ENCODE measurements at regions of chr1 and their contacts with region 1.

Region 1: GRCh38 chr1:111045033-111045722 is 81.5 kb upstream of the LRIF1 start:
- DNase-seq: peak; percentile 50 to 61
- H3K4me3 ChIP-seq: no peak overlapping the region
- H3K4me3 Mint-ChIP-seq: no peak overlapping the region
- H3K27ac Mint-ChIP-seq: no peak overlapping the region
- H3K4me1 ChIP-seq: peaks cover 9% of the 10 kb centered on the region
- H3K4me1 Mint-ChIP-seq: no peaks in the 10 kb centered on the region
- H3K27me3 ChIP-seq: no peaks in the 10 kb centered on the region
- H3K27me3 Mint-ChIP-seq: no peaks in the 10 kb centered on the region
- CTCF ChIP-seq: no peak

Region 2: DNA sequence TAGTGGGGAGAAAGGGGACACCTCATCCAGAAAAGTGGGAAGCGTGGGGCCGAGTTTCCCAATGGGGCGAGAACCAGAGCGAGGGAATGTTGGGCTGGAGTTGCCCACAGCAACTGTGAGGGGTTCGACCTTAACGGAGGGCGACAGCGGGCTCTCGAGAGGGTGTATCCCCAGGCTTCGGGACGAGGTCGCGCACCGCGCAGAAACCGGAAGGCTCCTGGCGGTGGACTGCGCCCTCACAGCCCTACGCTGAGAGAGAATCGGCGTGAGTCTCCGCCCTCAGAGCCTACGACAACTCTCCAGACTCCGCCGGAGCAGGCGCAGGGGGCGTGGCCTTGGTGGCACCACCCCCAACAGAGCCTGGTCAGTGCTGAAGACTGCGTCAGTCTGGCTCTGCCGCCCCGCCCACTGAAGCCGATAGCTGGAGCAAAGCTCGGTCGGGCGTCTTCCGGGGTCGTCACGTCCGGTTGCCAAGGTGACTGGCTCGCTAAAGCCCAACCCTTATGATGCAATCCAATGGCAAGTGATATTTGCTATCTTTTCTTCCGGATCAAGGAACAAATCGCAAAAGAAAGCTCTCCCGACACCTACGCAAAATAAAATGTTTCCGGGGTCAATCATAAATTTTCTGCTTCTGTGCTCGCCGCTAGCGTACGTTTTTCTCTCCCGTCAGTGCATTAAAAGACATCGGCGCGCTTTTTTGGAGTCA is 81.3 kb before region 1 on chr1 and contains the start of gene LRIF1:
- CTCF ChIA-PET with region 1: no interaction called
- POLR2A ChIA-PET with region 1: interaction called, 4 read pairs
- intact Hi-C with region 1: loop called (anchors 10 kb)
- DNase-seq: peak; percentile 99
- H3K4me3 ChIP-seq: peak within 1 kb of the TSS; percentile 76
- H3K4me3 Mint-ChIP-seq: peak within 1 kb of the TSS; percentile 87
- H3K27ac Mint-ChIP-seq: peak within 1 kb of the TSS; percentile 95
- H3K4me1 ChIP-seq: peaks cover 19% of the 10 kb centered on the region
- H3K4me1 Mint-ChIP-seq: peaks cover 21% of the 10 kb centered on the region
- H3K27me3 ChIP-seq: no peaks in the 10 kb centered on the region
- H3K27me3 Mint-ChIP-seq: no peaks in the 10 kb centered on the region
- CTCF ChIP-seq: peak in 1 of 2 experiments; percentile 28
- total RNA-seq, gene LRIF1: 31.7 and 35.2 TPM in 2 replicates

Measured in Caco-2 (cell line).